Panc1 (cell line): ENCODE measurements at regions of chr7 and their contacts with region 1.

Region 1: GRCh38 chr7:3649250-3649649 is 348.2 kb downstream of the SDK1 start:
- DNase-seq: no peak
- ATAC-seq: no peak
- H3K4me3 ChIP-seq: no peak overlapping the region
- H3K27ac ChIP-seq: peak overlapping the region; percentile 19; the same call in 1 of the 2 replicates
- H3K4me1 ChIP-seq: peaks cover 4% of the 10 kb centered on the region; the same call in 1 of the 2 replicates
- H3K27me3 ChIP-seq: no peaks in the 10 kb centered on the region
- CTCF ChIP-seq: peak; percentile 62

Region 2: GRCh38 chr7:3533040-3533439 is 116.2 kb before region 1 on chr7:
- CTCF ChIA-PET with region 1: no interaction called
- POLR2A ChIA-PET with region 1: interaction called, 10 read pairs
- in situ Hi-C with region 1: no loop called
- intact Hi-C with region 1: no loop called
- DNase-seq: no peak
- ATAC-seq: no peak
- H3K4me3 ChIP-seq: no peak overlapping the region
- H3K27ac ChIP-seq: peak overlapping the region; percentile 35; the same call in 1 of the 2 replicates
- H3K4me1 ChIP-seq: peaks cover 21% of the 10 kb centered on the region
- H3K27me3 ChIP-seq: no peaks in the 10 kb centered on the region
- CTCF ChIP-seq: no peak